ENCODE measurements at regions of chr3 and their contacts with region 1.

Region 1: GRCh38 chr3:156151824-156152428 is 31.5 kb downstream of the KCNAB1 start:
- DNase-seq: peak; percentile 68
- ATAC-seq: peak; percentile 85 to 91
- H3K4me3 ChIP-seq: no peak overlapping the region
- H3K27ac ChIP-seq: no peak overlapping the region
- H3K4me1 ChIP-seq: peaks cover 27% of the 10 kb centered on the region
- H3K27me3 ChIP-seq: no peaks in the 10 kb centered on the region
- CTCF ChIP-seq: peak; percentile 70

Region 2: DNA sequence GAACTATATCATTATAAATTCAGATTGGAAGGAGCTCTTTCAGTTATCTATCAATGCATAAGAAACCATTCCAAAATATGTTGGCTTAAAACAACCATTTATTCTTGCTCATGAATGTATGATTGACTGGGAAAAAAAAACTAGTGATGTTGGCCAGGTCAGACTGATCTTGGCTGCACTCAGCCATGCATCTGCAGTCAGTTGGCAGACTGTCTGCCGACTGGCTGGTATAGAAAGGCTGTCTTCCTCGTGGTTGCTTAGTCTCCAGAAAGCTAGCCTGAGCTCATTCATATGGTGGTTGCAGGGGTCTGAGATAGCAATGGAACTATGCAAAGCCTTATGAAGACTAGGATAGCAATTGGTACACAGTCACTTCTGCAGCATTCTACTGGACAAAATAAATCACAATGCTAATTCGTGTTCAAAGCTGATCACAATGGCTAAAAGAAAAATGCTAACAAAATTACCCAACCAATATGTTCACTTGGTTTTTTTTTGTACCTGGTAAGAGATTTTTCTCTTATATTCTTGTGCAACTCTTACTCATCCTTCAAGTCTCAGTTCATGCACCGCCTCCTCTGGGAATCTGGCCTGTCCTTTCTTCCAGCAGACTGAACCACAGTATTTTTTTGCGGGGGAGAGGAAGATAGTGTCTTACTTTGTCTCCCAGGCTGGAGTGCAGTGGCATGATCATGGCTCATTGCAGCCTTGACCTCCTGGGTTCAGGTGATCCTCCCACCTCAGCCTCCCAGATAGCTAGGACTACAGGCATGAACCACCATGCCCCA is 95.2 kb after region 1 on chr3:
- intact Hi-C with region 1: no loop called
- DNase-seq: no peak
- ATAC-seq: no peak
- H3K4me3 ChIP-seq: no peak overlapping the region
- H3K27ac ChIP-seq: no peak overlapping the region
- H3K4me1 ChIP-seq: no peaks in the 10 kb centered on the region
- H3K27me3 ChIP-seq: peaks cover 8% of the 10 kb centered on the region
- CTCF ChIP-seq: no peak

Region 3: DNA sequence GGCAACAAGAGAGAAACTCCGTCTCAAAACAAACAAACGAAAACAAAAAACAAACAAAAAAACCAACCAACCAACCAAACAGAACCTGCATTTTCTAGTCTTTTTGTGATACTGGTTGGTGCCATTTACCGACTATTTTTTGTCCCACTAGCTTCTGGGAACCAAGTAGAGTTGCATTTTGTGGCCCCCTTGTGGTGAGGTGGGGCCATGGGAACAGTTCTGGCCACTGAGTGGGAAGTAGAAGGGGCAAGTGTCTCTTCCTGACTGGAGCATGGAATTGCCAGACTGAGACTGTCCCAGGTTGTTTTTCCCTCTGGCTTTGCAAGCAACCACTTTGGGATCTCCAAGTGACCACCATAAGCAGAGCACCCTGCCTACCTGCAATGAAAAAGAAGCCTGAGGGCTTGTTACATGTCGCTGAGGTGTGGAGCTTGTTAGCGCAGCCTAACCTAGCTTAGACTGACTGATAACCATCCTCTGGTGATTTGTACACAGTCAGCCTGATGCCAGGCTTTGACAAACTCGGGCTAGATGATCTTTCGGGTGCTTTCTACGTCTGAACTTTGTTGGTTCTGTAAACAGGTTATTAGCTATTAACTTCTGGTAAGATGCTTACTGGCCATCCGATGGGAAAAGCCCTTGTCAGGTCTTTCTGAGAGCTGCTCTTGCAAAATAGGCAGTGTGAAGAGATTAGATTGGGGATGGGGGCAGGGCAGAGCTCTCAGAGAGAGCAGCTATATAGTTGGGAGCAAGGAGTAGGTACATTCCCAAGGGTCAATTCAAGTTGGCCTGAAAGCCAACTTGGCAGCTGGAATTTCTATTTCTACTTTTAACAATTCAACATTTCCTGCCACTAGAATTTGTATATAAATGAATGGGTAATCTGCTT is 230.8 kb after region 1 on chr3:
- intact Hi-C with region 1: no loop called
- DNase-seq: no peak
- ATAC-seq: peak; percentile 45 to 55
- H3K4me3 ChIP-seq: no peak overlapping the region
- H3K27ac ChIP-seq: no peak overlapping the region
- H3K4me1 ChIP-seq: no peaks in the 10 kb centered on the region
- H3K27me3 ChIP-seq: no peaks in the 10 kb centered on the region
- CTCF ChIP-seq: peak; percentile 61

Region 4: DNA sequence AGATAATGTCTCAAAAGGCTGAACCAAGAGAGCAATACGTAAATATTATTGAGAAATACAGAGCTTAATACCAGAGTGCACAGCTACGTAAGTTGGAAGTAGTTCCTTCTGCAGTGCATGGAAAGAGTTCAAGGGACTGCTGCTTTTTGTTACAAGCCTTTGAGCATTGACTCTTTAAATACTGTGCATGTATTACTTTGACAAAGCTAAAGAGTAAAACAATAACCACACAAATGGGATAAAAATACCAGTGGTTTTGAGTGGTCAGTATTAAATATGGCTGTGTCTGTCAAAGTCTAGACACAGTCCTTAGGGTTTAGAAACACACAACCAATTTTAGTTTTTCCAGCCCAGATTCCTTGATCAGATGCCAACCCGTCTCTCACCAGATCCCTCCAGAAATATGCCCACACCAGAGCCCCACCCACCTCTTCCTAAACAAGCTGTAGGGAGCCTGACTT is 340.9 kb after region 1 on chr3:
- intact Hi-C with region 1: no loop called
- DNase-seq: no peak
- ATAC-seq: no peak
- H3K4me3 ChIP-seq: no peak overlapping the region
- H3K27ac ChIP-seq: no peak overlapping the region
- H3K4me1 ChIP-seq: no peaks in the 10 kb centered on the region
- H3K27me3 ChIP-seq: no peaks in the 10 kb centered on the region
- CTCF ChIP-seq: no peak

Region 5: GRCh38 chr3:156519758-156520162 is 367.8 kb after region 1 on chr3:
- intact Hi-C with region 1: loop called (anchors 10 kb)
- DNase-seq: no peak
- ATAC-seq: no peak
- H3K4me3 ChIP-seq: no peak overlapping the region
- H3K27ac ChIP-seq: no peak overlapping the region
- H3K4me1 ChIP-seq: no peaks in the 10 kb centered on the region
- H3K27me3 ChIP-seq: no peaks in the 10 kb centered on the region
- CTCF ChIP-seq: no peak

Measured in lower lobe of right lung (tissue), 2 donors.